AG04450 (cell line): ENCODE measurements at regions of chr7 and their contacts with region 1.

Region 1: DNA sequence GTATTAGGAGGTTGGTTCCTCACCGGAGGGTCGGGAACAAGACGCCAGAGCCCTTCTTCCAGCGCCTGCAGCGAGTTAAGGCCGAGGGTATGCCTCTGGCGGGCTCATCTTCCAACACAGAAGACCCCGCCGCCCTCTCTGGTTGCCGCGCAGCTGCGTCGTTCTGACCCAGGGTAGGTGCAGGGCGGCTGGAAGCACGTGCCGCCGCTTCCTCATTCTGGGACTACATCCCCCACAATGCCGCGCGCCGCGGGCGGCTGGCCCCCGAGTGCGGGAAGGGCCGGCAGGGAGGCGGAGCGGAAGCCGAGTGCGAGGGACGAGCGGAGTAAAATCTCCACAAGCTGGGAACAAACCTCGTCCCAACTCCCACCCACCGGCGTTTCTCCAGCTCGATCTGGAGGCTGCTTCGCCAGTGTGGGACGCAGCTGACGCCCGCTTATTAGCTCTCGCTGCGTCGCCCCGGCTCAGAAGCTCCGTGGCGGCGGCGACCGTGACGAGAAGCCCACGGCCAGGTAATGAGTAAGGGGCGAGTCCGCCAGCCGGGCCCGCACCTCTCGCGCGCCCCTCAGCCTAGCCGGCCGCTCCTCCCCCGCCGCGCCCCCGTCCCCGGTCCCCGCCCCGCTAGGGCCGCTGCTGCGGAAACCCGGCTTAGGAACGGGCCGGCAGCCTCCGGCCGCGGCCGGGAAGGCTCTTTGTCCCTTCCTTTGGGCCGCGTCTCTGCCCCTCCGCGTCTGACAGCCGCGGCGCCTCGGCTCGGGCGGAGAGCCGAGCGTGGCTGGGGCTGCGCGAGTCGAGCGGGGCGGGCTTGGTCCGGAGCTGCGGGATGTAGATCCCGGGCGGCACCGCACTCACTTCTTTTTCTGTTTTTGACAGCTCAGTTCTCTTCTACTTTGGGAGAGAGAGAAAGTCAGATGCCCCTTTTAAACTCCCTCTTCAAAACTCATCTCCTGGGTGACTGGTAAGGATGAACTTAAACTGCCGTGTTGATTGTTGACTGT is at the start of gene CCDC126:
- DNase-seq: peak; percentile 72
- H3K4me3 ChIP-seq: peak within 1 kb of the TSS; percentile 80
- H3K27ac ChIP-seq: peak within 1 kb of the TSS; percentile 80
- H3K27me3 ChIP-seq: no peaks in the 10 kb centered on the region
- CTCF ChIP-seq: no peak
- polyA plus RNA-seq, gene CCDC126: 5.7 and 7.6 TPM in 2 replicates

Region 2: DNA sequence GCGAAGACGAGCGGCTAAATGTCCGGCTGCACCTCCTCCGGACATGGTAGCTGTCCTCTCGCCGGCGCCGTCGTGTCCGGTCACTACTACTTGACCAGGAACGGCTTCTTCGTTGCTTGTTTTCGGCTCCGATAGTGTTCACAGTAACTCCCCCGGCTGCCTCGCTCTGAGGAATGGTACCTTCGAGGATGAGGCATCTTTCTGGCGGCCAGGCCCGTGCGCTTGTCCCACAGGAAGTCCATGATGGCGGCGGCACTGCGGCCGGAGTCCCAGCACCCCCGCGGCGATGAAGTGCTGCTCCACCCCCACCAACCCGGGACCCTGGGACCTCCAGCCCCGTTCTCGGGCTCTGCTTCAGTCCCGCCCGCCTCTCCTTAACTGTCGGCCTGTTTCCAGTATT is 11.2 kb before region 1 on chr7:
- CTCF ChIA-PET with region 1: no interaction called
- POLR2A ChIA-PET with region 1: interaction called, 10 read pairs
- DNase-seq: no peak
- H3K4me3 ChIP-seq: no peak overlapping the region
- H3K27ac ChIP-seq: no peak overlapping the region
- H3K27me3 ChIP-seq: peaks cover 3% of the 10 kb centered on the region
- CTCF ChIP-seq: no peak

Region 3: GRCh38 chr7:23679898-23680413 is 82.6 kb after region 1 on chr7 and contains the start of gene FAM221A:
- CTCF ChIA-PET with region 1: interaction called, 21 read pairs
- POLR2A ChIA-PET with region 1: no interaction called
- DNase-seq: peak; percentile 47
- H3K4me3 ChIP-seq: peak within 1 kb of the TSS; percentile 68
- H3K27ac ChIP-seq: peak within 1 kb of the TSS; percentile 31
- H3K27me3 ChIP-seq: no peaks in the 10 kb centered on the region
- CTCF ChIP-seq: peak; percentile 70
- polyA plus RNA-seq, gene FAM221A: 3.1 and 3.5 TPM in 2 replicates